HCT116 (cell line): ENCODE measurements at regions of chr6 and their contacts with region 1.

Region 1: GRCh38 chr6:29737707-29738630 is 14.7 kb downstream of the HLA-F start:
- DNase-seq: peak; percentile 59
- ATAC-seq: peak; percentile 96
- H3K4me3 ChIP-seq: no peak overlapping the region
- H3K27ac ChIP-seq: no peak overlapping the region
- H3K4me1 ChIP-seq: no peaks in the 10 kb centered on the region
- H3K27me3 ChIP-seq: no peaks in the 10 kb centered on the region
- CTCF ChIP-seq: peak; percentile 80 to 85 (median 84)
- POLR2A ChIP-seq: no peak
- RAD21 ChIP-seq: peak; percentile 95

Region 2: DNA sequence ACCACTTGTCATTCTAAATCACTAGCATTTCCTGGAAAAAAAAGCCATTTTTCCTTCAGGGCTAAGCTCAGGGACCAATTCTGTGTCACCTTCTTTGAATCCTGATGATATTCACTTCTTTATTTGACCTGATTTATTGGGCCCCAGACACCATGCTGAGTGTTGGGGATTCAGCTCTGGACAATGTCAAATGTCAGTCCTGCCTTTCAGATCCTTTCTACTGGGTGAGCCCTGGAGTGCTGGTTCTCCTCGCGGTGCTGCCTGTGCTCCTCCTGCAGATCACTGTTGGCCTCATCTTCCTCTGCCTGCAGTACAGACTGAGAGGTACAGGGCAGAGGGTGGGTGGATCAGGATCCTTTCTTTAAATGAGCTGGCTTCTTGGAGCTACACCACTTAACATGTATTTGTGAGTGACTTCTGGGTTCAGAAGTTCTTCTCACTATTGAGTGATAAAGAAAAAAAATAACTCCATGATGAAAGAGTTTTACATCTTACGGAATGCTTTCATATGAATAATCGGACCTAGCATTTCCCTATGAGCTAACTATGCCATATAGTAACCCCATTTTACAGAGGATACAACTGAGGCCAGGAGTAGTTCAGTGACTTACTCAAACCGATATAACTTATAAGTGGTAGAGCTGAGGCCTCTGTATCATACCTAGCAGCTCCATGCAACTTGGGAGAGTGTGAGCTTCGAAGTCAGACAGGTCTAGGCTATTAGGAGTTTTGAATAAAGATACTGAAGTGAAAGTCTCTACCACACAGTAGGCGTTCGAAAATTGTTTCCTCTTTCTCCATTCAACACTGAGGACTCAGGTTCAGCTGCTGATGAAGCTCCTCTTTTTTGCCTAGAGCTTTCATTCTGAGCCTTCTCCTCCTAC is 71.8 kb before region 1 on chr6:
- CTCF ChIA-PET with region 1: no interaction called
- POLR2A ChIA-PET with region 1: no interaction called
- RAD21 ChIA-PET with region 1: no interaction called
- intact Hi-C with region 1: no loop called
- DNase-seq: no peak
- ATAC-seq: no peak
- H3K4me3 ChIP-seq: no peak overlapping the region
- H3K27ac ChIP-seq: no peak overlapping the region
- H3K4me1 ChIP-seq: no peaks in the 10 kb centered on the region
- H3K27me3 ChIP-seq: no peaks in the 10 kb centered on the region
- CTCF ChIP-seq: no peak
- POLR2A ChIP-seq: no peak
- RAD21 ChIP-seq: no peak

Region 3: GRCh38 chr6:29752451-29753308 is 14.7 kb after region 1 on chr6:
- CTCF ChIA-PET with region 1: interaction called, 17 read pairs
- POLR2A ChIA-PET with region 1: no interaction called
- RAD21 ChIA-PET with region 1: no interaction called
- intact Hi-C with region 1: no loop called
- DNase-seq: peak; percentile 90
- ATAC-seq: peak; percentile 79
- H3K4me3 ChIP-seq: peak overlapping the region; percentile 63 to 83
- H3K27ac ChIP-seq: peak overlapping the region; percentile 74
- H3K4me1 ChIP-seq: peaks cover 2 to 27% of the 10 kb centered on the region in 2 experiments; a peak in 3 of 4 replicates
- H3K27me3 ChIP-seq: no peaks in the 10 kb centered on the region
- CTCF ChIP-seq: peak; percentile 98 to 99 (median 99)
- POLR2A ChIP-seq: peak; percentile 16
- RAD21 ChIP-seq: peak; percentile 81

Region 4: DNA sequence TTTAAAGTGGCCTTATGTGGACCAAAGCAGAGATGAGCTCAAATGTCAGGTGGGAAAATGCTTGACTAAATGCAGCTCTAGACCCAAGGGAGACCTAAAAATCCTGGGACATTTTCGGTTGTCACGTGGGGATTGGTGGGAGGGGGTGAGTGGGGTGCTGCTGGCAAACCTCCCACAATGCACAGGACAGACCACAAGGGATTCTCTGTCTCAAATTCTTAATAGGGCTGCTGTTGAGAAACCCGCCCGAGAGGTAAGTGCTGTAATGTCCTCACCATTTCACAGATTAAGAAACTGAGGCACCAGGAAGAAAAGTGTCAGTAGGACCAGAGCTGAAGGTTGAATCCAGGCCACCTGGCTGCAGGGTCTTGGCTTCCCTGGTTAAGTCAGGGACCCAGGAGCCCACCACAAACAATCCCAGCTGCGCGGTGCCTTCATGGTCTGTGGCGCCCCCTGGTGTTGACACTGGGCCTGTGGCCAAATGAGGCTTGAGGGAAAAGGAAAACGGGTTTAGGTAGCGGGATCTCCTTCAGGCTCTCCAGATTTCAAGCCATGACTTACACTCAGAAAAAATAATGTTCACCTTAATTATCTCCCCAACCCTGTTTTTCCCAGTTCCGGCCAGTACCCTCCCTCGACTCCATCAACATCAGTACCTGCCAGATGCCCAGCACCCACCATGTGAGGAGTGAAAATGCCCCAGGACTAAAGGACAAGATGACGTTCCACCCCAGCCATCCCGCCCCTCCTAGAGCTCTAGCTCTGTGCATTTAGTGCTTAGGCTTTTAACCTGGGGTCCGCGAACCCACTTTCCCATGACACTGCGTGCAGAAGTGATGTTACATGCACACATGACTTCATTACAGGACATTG is 96.8 kb after region 1 on chr6:
- CTCF ChIA-PET with region 1: interaction called, 55 read pairs
- POLR2A ChIA-PET with region 1: no interaction called
- RAD21 ChIA-PET with region 1: interaction called, 10 to 12 read pairs
- intact Hi-C with region 1: loop called (anchors 1 kb)
- DNase-seq: no peak
- ATAC-seq: peak; percentile 91
- H3K4me3 ChIP-seq: no peak overlapping the region
- H3K27ac ChIP-seq: no peak overlapping the region
- H3K4me1 ChIP-seq: no peaks in the 10 kb centered on the region
- H3K27me3 ChIP-seq: peaks cover 3% of the 10 kb centered on the region; the same call in 1 of the 2 replicates
- CTCF ChIP-seq: peak; percentile 93 to 96 (median 93)
- POLR2A ChIP-seq: no peak
- RAD21 ChIP-seq: peak; percentile 98

Region 5: DNA sequence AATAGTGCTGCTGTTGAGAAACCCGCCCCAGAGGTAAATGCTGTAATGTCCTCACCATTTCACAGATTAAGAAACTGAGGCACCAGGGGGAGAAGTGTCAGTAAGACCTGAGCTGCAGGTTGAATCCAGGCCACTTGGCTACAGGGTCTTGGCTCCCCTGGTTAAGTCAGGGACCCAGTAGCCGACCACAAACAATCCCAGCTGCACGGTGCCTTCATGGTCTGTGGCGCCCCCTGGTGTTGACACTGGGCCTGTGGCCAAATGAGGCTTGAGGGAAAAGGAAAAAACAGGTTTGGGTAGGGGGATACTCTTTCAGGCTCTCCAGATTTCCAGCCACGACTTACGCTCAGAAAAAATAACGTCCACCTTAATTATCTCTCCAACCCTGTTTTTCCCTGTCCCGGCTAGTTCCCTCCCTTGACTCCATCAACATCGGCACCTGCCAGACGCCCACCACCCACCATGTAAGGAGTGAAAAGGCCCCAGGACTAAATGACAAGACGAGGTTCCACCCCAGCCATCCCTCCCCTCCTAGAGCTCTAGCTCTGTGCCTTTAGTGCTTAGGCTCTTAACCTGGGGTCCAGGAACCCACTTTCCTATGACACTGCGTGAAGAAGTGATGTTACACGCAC is 275.4 kb after region 1 on chr6:
- CTCF ChIA-PET with region 1: interaction called, 6 read pairs
- POLR2A ChIA-PET with region 1: no interaction called
- RAD21 ChIA-PET with region 1: no interaction called
- intact Hi-C with region 1: loop called (anchors 2 kb)
- DNase-seq: no peak
- ATAC-seq: peak; percentile 80
- H3K4me3 ChIP-seq: no peak overlapping the region
- H3K27ac ChIP-seq: no peak overlapping the region
- H3K4me1 ChIP-seq: no peaks in the 10 kb centered on the region
- H3K27me3 ChIP-seq: no peaks in the 10 kb centered on the region
- CTCF ChIP-seq: peak; percentile 77 to 91 (median 83); a peak in 5 of 6 replicates
- POLR2A ChIP-seq: no peak
- RAD21 ChIP-seq: peak; percentile 89